B cell (primary cell): ENCODE measurements at regions of chr6 and their contacts with region 1.

Region 1: GRCh38 chr6:32984605-32985389 is 16.4 kb downstream of the BRD2 start:
- DNase-seq: peak; percentile 92
- ATAC-seq: peak; percentile 95
- H3K4me3 ChIP-seq: no peak overlapping the region
- H3K4me3 Mint-ChIP-seq: no peak overlapping the region
- H3K27ac ChIP-seq: peak overlapping the region; percentile 13 to 60
- H3K27ac Mint-ChIP-seq: peak overlapping the region; percentile 28
- H3K4me1 ChIP-seq: peaks cover 17 to 19% of the 10 kb centered on the region in 2 donors
- H3K4me1 Mint-ChIP-seq: peaks cover 33% of the 10 kb centered on the region
- H3K27me3 ChIP-seq: no peaks in the 10 kb centered on the region
- H3K27me3 Mint-ChIP-seq: no peaks in the 10 kb centered on the region
- CTCF ChIP-seq: peak; percentile 91

Region 2: DNA sequence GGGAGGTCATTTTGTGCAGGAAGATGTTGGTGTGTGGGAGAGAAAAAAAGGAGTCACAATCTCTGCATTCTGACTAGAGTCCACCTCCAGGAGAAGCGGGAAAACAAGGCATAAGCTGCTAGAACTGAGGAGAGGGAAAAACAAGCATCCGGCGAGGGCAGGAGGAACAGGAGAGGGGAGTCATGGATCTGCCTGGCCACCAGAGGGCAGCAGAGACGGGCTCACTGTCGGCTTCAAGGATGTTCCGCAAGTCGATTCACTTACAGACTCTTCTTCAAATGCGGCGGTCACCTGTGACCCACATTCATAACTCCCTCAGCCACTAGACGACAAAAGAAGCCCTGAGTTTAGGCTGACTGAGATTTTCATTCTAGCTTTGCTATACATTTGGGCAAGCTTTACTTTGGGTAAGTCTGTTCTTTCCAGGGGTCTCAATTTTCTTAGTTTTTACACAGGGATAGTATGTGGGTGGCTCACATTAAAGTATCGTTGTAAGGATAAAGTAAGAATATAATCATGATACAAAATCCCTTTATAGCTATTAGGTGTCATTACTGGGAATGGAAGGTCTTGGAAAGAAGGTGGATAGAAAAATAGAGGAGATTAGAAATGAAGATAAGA is 571.3 kb before region 1 on chr6:
- CTCF ChIA-PET with region 1: interaction called, 3 read pairs
- POLR2A ChIA-PET with region 1: no interaction called
- intact Hi-C with region 1: loop called (anchors 10 kb)
- DNase-seq: peak; percentile 91
- ATAC-seq: peak; percentile 86
- H3K4me3 ChIP-seq: no peak overlapping the region
- H3K4me3 Mint-ChIP-seq: peak overlapping the region; percentile 27
- H3K27ac ChIP-seq: no peak overlapping the region
- H3K27ac Mint-ChIP-seq: peak overlapping the region; percentile 8
- H3K4me1 ChIP-seq: peaks cover 7 to 11% of the 10 kb centered on the region in 2 donors
- H3K4me1 Mint-ChIP-seq: peaks cover 13% of the 10 kb centered on the region
- H3K27me3 ChIP-seq: peaks cover 0 to 19% (median 10%) of the 10 kb centered on the region in 4 experiments
- H3K27me3 Mint-ChIP-seq: peaks cover 20% of the 10 kb centered on the region
- CTCF ChIP-seq: peak; percentile 94

Region 3: DNA sequence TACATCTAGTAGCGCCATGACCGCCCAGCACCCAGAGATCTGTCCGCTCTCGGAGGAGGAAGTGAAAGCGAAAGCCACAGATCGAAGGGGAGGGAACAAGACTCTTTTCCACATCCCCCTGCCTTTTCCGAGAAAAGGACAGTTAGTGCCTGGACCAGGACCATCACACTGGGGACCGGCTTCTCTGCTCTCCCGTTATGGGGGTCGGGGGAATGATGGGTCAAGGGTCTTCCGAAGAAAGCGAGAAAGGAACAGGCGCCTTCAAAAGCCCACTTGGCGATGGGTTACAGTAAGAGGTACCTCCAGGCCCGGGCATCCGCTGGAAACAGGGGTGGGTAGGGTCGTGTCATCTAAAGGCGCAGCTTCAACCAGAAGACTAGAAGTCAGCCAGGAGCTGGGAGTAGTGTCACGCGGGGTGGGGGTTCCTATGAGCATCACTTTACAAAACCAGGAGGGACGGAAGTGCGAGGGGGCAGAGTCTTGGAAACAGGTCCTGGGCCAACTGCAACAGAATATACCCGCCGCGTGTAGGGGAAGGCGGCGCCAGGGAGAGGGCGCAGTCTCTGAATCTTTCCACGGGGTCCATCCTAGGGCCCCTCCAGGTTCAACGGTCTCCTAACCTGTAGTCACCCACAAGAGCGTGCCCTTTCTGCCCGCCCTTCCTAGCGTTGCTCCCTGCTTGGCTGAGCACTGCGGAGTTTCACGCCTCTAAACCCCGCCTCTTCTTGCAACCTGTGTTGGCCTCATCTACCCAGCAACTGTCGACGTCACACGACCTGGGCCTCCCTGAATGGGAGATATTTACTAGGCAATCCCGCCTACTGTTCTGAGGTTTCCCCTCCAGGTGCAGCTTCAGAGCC is 140.6 kb before region 1 on chr6 and contains the start of gene PSMB8:
- CTCF ChIA-PET with region 1: interaction called, 63 read pairs
- POLR2A ChIA-PET with region 1: interaction called, 5 read pairs
- intact Hi-C with region 1: no loop called
- DNase-seq: peak; percentile 99
- ATAC-seq: peak; percentile 78
- H3K4me3 ChIP-seq: peak within 1 kb of the TSS; percentile 88 to 100 (median 95)
- H3K4me3 Mint-ChIP-seq: peak within 1 kb of the TSS; percentile 95
- H3K27ac ChIP-seq: peak within 1 kb of the TSS; percentile 96 to 97
- H3K27ac Mint-ChIP-seq: peak within 1 kb of the TSS; percentile 99
- H3K4me1 ChIP-seq: peaks cover 72 to 81% of the 10 kb centered on the region in 2 donors
- H3K4me1 Mint-ChIP-seq: peaks cover 86% of the 10 kb centered on the region
- H3K27me3 ChIP-seq: no peaks in the 10 kb centered on the region
- H3K27me3 Mint-ChIP-seq: no peaks in the 10 kb centered on the region
- CTCF ChIP-seq: no peak
- total RNA-seq, gene PSMB8: 127 and 129 TPM in 2 replicates

Region 4: DNA sequence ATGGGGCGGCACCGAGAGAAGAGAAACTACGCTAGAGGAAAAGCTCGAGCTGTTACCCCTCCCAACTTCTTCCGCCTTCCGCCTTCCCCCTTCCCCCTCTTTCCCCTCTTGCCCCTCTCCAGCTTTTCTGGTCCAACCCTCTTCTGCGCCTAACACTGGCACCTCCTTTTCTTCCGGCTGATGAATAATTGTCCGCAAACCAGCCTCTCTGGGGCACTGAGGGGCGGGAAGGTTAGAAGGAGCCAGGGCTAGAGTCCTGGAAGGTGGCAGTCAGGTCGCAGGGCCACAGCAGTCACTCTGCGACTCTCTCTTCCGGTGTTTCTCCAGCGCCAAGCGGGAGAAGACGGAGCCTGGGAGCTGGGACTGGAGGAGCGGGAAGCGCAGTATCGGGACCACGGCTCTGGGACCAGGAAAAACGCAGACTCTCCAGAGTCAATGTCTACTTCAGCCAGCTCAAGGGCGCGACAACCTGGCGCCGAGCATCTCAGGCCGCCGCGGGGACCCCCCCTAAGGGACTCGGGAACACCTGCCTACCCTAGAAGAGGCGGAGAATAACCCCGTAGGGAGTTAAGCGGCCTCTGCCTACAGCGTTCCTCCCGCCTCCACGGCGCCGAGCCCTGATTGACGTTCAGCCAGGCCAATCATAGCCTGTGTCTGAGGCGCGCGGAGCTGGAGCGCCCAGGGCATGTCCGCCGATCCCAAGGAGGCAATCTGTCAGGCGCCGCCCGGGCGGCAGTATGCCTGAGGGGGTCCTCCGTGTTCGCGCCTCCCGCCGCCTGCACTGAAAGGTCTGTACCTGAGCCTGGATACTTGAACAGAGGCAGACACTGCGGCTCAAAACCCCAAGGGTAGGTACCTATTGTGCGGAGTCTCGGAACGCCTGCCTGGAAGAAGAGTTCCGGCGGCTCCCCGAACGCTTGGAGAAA is 90.5 kb before region 1 on chr6:
- CTCF ChIA-PET with region 1: interaction called, 305 read pairs
- POLR2A ChIA-PET with region 1: interaction called, 9 read pairs
- intact Hi-C with region 1: no loop called
- DNase-seq: peak; percentile 98
- ATAC-seq: peak; percentile 98
- H3K4me3 ChIP-seq: peak overlapping the region; percentile 84 to 96 (median 92)
- H3K4me3 Mint-ChIP-seq: peak overlapping the region; percentile 99
- H3K27ac ChIP-seq: peak overlapping the region; percentile 89 to 90
- H3K27ac Mint-ChIP-seq: peak overlapping the region; percentile 98
- H3K4me1 ChIP-seq: peaks cover 40 to 42% of the 10 kb centered on the region in 2 donors
- H3K4me1 Mint-ChIP-seq: peaks cover 60% of the 10 kb centered on the region
- H3K27me3 ChIP-seq: no peaks in the 10 kb centered on the region
- H3K27me3 Mint-ChIP-seq: no peaks in the 10 kb centered on the region
- CTCF ChIP-seq: no peak

Region 5: DNA sequence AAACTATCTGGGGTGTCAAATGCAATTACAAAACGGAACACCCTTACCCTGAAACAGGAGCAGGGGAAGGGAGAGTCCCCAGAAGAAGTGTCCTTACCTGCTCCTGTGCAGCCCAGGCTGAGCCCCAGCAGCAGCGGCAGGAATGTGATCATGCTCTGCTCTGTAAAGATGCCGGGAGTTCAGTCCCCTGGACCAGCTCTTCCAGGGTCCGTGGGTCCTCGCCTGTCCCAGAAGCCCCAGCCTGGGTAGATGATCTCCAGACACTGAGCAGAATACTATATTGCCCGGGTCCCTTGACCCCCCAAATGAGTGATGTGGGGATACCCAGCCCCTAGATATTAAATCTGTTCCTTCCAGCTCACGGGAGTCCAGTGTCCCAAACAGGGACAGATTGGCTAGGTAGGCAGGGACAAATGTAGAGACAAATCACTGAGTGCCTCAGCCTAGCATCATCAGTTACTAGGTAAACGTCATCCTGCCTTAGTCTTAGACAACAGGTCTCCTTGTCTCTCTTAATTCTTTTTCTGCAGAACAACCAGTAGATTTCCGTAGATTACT is 44.1 kb before region 1 on chr6 and contains the start of gene HLA-DMB:
- CTCF ChIA-PET with region 1: interaction called, 155 read pairs
- POLR2A ChIA-PET with region 1: interaction called, 14 read pairs
- intact Hi-C with region 1: loop called (anchors 2 kb)
- DNase-seq: peak; percentile 91
- ATAC-seq: peak; percentile 51
- H3K4me3 ChIP-seq: peak within 1 kb of the TSS; percentile 95 to 100 (median 96)
- H3K4me3 Mint-ChIP-seq: peak within 1 kb of the TSS; percentile 96
- H3K27ac ChIP-seq: peak within 1 kb of the TSS; percentile 97 to 98
- H3K27ac Mint-ChIP-seq: peak within 1 kb of the TSS; percentile 99
- H3K4me1 ChIP-seq: peaks cover 66 to 82% of the 10 kb centered on the region in 2 donors
- H3K4me1 Mint-ChIP-seq: peaks cover 80% of the 10 kb centered on the region
- H3K27me3 ChIP-seq: no peaks in the 10 kb centered on the region
- H3K27me3 Mint-ChIP-seq: no peaks in the 10 kb centered on the region
- CTCF ChIP-seq: no peak
- total RNA-seq, gene HLA-DMB: 587 and 593 TPM in 2 replicates

Region 6: GRCh38 chr6:32971581-32972352 is 13.0 kb before region 1 on chr6:
- CTCF ChIA-PET with region 1: interaction called, 239 read pairs
- POLR2A ChIA-PET with region 1: interaction called, 92 read pairs
- intact Hi-C with region 1: loop called (anchors 1 kb)
- DNase-seq: peak; percentile 100
- ATAC-seq: peak; percentile 50
- H3K4me3 ChIP-seq: peak overlapping the region; percentile 88 to 100 (median 96)
- H3K4me3 Mint-ChIP-seq: peak overlapping the region; percentile 96
- H3K27ac ChIP-seq: peak overlapping the region; percentile 96
- H3K27ac Mint-ChIP-seq: peak overlapping the region; percentile 99
- H3K4me1 ChIP-seq: peaks cover 32 to 43% of the 10 kb centered on the region in 2 donors
- H3K4me1 Mint-ChIP-seq: peaks cover 40% of the 10 kb centered on the region
- H3K27me3 ChIP-seq: no peaks in the 10 kb centered on the region
- H3K27me3 Mint-ChIP-seq: no peaks in the 10 kb centered on the region
- CTCF ChIP-seq: no peak